ENCODE measurements at regions of chr10 and their contacts with region 1.

Region 1: DNA sequence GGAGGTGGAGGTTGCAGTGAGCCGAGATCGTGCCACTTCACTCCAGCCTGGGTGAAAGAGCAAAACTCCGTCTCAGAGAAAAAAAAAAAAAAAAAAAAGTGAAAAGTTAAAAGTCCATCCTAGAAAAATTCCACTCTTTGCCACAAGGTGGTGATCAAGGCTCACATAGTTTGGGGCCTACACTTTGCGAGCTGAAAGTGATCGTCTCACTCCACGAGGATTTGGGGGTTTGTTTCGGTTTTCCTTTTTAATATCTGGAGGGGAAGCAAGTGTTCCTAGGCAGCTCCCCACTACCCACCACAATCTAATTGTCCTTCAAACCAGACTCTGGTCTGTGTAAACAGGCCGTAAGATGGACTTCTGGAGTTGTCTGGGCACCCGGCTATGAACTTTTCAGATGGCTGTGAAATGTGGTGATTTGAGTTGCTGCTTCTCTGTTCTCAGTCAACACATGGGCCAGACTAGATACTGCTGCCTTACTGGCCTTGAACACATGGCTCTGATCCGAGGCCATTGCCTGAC is 27.1 kb downstream of the PRLHR start:
- DNase-seq: no peak
- H3K4me3 ChIP-seq: no peak overlapping the region; the same call in 1 of the 2 replicates
- CTCF ChIP-seq: peak; percentile 55

Region 2: DNA sequence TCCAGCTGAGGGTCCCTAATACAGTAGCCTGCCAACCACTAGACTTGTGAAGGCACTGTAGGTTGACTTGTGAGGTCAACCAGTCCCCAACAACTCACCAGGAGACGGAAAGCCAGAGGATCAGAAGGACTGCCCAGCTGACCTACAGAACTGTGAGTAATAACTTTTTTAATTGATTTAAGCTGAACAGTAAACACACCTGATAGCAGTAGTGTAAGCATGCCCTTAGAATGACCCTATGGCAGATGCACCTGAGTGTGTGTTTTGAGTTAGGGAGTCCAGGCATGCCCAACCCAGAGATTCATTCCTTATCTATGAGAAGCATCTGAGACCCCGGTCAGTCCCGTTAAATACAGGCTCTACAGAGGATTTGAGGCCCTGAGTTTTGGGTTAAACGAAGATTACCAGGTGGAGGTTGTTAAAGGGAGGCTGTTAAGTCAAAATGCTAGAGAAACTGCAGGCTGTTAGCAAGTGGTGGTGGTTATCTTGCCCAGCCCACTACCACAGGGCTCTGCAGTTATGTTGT is 13.0 kb after region 1 on chr10:
- CTCF ChIA-PET with region 1: interaction called, 19 read pairs
- POLR2A ChIA-PET with region 1: no interaction called
- DNase-seq: no peak
- H3K4me3 ChIP-seq: no peak overlapping the region
- CTCF ChIP-seq: no peak

Region 3: GRCh38 chr10:118729641-118730258 is 161.4 kb after region 1 on chr10:
- CTCF ChIA-PET with region 1: interaction called, 44 read pairs
- POLR2A ChIA-PET with region 1: no interaction called
- DNase-seq: no peak
- H3K4me3 ChIP-seq: no peak overlapping the region
- CTCF ChIP-seq: no peak

Region 4: GRCh38 chr10:118800920-118801319 is 232.5 kb after region 1 on chr10:
- CTCF ChIA-PET with region 1: interaction called, 18 read pairs
- POLR2A ChIA-PET with region 1: no interaction called
- DNase-seq: no peak
- H3K4me3 ChIP-seq: no peak overlapping the region
- CTCF ChIP-seq: peak; percentile 17

Region 5: GRCh38 chr10:118882741-118883140 is 314.4 kb after region 1 on chr10:
- CTCF ChIA-PET with region 1: no interaction called
- POLR2A ChIA-PET with region 1: no interaction called
- DNase-seq: no peak
- H3K4me3 ChIP-seq: no peak overlapping the region
- CTCF ChIP-seq: no peak